ENCODE measurements at regions of chr17 and their contacts with region 1.

Region 1: GRCh38 chr17:8300627-8301242 is 5.5 kb upstream of the SLC25A35 start:
- DNase-seq: peak; percentile 42 to 58
- H3K4me3 ChIP-seq: no peak overlapping the region
- H3K27ac ChIP-seq: no peak overlapping the region
- H3K4me1 ChIP-seq: no peaks in the 10 kb centered on the region
- H3K27me3 ChIP-seq: no peaks in the 10 kb centered on the region
- CTCF ChIP-seq: peak; percentile 82

Region 2: GRCh38 chr17:7889166-7889955 is 411.4 kb before region 1 on chr17:
- CTCF ChIA-PET with region 1: no interaction called
- POLR2A ChIA-PET with region 1: no interaction called
- intact Hi-C with region 1: no loop called
- DNase-seq: peak; percentile 83 to 98
- H3K4me3 ChIP-seq: peak overlapping the region; percentile 84; the same call in 1 of the 2 replicates
- H3K27ac ChIP-seq: peak overlapping the region; percentile 80
- H3K4me1 ChIP-seq: peaks cover 17% of the 10 kb centered on the region
- H3K27me3 ChIP-seq: no peaks in the 10 kb centered on the region
- CTCF ChIP-seq: peak; percentile 43; the same call in 1 of the 2 replicates

Region 3: DNA sequence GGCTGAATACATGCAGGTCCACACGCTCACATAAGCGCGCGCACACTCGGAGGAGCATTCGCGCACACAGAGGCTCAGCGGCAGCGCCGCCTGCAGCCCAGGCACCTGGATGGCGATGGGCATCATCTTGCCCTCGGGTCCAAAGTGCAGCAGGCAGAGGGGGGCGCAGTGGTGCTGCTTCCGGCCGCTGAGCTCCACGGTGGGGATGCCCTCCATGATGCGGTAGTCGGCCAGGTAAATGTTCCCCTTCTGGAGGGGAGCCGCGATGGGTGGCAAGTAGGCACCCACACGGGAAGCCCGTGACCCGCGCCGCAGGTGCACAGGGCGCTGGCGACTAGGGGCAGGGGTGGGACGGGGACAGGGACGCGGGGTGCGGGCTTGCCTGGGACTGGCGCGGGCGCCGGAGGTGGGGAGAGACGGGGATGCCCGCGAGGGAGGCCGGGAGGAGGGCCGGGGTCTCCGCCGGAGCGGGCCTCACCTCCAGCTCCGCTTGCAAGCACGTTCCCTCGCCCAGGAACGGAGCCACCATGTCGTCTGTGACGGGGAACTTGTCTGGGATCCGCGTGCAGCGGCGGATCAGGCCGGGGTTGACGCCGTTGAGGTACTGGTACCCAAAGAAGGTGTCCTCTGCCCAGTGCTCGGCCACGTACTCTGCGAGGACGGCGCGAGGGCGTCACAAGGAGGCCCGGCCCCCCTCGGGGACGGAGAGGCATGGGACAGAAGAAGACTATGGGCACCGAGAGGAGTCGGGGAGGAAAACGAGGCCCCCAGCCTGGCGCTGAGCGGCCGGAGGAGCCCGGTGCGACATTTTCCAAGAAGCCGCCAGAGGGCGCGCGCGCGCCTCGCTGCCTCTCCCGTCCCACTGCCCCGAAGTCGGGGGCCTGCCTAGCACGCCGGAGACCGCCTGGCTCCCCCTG is 221.2 kb before region 1 on chr17:
- CTCF ChIA-PET with region 1: interaction called, 4 read pairs
- POLR2A ChIA-PET with region 1: no interaction called
- intact Hi-C with region 1: loop called (anchors 1 kb)
- DNase-seq: peak in 1 of 2 experiments; percentile 78
- H3K4me3 ChIP-seq: peak overlapping the region; percentile 54
- H3K27ac ChIP-seq: no peak overlapping the region
- H3K4me1 ChIP-seq: no peaks in the 10 kb centered on the region
- H3K27me3 ChIP-seq: peaks cover 6% of the 10 kb centered on the region
- CTCF ChIP-seq: peak; percentile 81

Region 4: GRCh38 chr17:8288336-8289102 is 12.2 kb before region 1 on chr17 and contains the start of gene RANGRF:
- CTCF ChIA-PET with region 1: no interaction called
- POLR2A ChIA-PET with region 1: interaction called, 25 read pairs
- intact Hi-C with region 1: no loop called
- DNase-seq: peak; percentile 49 to 86
- H3K4me3 ChIP-seq: peak within 1 kb of the TSS; percentile 88
- H3K27ac ChIP-seq: no peak within 1 kb of the TSS
- H3K4me1 ChIP-seq: peaks cover 5% of the 10 kb centered on the region; the same call in 1 of the 2 replicates
- H3K27me3 ChIP-seq: no peaks in the 10 kb centered on the region
- CTCF ChIP-seq: no peak
- total RNA-seq, gene RANGRF: 35.0 and 45.5 TPM in 2 replicates

Region 5: GRCh38 chr17:8376271-8377067 is 75.7 kb after region 1 on chr17 and contains the start of gene KRABD2:
- CTCF ChIA-PET with region 1: interaction called, 3 read pairs
- POLR2A ChIA-PET with region 1: no interaction called
- intact Hi-C with region 1: loop called (anchors 5 kb)
- DNase-seq: peak; percentile 40 to 94
- H3K4me3 ChIP-seq: no peak within 1 kb of the TSS
- H3K27ac ChIP-seq: no peak within 1 kb of the TSS
- H3K4me1 ChIP-seq: peaks cover 19% of the 10 kb centered on the region
- H3K27me3 ChIP-seq: no peaks in the 10 kb centered on the region
- CTCF ChIP-seq: peak; percentile 41; the same call in 1 of the 2 replicates